ENCODE measurements at regions of chr2 and their contacts with region 1.

Region 1: DNA sequence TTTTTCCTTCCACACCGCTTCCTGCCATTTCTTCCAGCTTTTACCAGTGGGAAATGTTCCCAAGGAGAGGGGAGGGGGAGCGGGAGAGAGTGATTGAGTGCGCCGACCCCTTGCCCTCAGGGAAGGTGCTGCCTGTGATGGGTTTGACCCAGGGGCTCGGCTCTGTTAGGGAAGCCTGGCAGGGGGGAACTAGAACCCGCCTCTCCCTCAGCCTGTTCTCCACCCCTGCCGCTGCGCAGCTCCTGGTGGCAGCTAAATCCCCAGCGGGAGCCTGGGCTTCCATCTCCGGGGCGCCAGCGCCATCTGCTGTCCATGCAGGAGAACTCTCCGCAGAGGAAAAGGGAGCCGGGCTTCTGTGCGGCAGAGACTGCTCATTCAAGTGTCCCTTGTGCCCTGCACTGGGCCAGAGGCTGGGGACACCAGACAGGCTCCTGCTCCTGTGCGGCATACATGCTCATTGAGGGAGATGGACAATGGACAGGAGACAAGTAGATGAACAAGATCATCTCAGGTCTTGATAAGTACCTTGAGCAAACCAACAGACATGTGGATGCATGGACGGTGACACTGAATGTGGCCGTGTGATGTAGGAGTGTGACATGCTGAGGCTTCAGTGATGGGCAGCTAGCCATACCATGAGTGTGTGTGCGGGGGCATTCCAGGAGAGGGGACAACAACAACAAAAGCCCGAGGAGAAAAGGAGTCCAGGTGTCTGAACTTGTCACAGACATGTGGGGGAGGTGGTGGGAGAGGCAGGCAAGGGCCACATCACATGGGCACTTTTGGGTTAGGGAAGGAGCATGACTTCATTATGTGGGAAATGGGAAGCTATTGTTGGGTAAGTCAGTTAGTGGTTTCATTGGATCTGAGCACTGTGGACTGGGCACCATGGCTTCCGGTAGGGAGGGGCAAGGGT is 13.3 kb downstream of the CHPF start:
- DNase-seq: peak; percentile 82
- ATAC-seq: peak; percentile 97
- H3K4me3 Mint-ChIP-seq: no peak overlapping the region
- H3K27ac Mint-ChIP-seq: no peak overlapping the region
- H3K4me1 Mint-ChIP-seq: no peaks in the 10 kb centered on the region
- H3K27me3 Mint-ChIP-seq: peaks cover 44% of the 10 kb centered on the region
- CTCF ChIP-seq: peak; percentile 96

Region 2: DNA sequence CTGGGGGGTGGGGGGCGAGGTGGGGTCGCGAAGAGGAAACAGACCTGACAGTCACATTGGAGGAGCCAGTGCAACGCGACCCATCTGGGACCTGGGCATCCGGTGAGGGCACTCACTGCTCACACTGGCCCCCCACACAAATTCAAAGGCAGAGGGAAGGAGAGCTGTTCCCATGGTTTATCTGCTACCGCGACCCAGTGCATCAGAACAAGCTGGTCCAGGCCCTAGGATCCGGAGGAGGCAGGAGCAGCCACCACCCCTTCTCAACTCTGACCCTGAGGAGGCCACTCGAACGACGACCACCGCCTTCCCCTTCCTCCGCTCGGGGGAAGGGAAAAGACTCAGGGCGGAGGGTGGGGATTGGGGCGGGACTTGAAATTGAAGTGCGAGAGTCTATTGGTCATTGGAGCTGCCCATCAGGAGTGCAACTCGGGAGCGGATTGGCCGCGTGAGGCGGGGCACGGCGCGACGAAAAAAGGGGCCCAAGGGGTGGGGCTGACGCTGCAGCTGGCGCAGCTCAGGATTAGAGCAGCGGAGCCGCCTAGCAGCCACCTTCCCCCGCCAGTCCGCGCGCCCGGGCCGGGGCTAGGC is 571.1 kb before region 1 on chr2 and contains the start of gene CDK5R2:
- CTCF ChIA-PET with region 1: no interaction called
- POLR2A ChIA-PET with region 1: no interaction called
- intact Hi-C with region 1: no loop called
- DNase-seq: peak; percentile 89
- ATAC-seq: peak; percentile 99
- H3K4me3 Mint-ChIP-seq: peak within 1 kb of the TSS; percentile 29
- H3K27ac Mint-ChIP-seq: no peak within 1 kb of the TSS
- H3K4me1 Mint-ChIP-seq: peaks cover 17% of the 10 kb centered on the region
- H3K27me3 Mint-ChIP-seq: peaks cover 74% of the 10 kb centered on the region
- CTCF ChIP-seq: no peak
- total RNA-seq, gene CDK5R2: not detected

Region 3: GRCh38 chr2:219104107-219105035 is 425.9 kb before region 1 on chr2:
- CTCF ChIA-PET with region 1: no interaction called
- POLR2A ChIA-PET with region 1: no interaction called
- intact Hi-C with region 1: no loop called
- DNase-seq: peak; percentile 30
- ATAC-seq: peak; percentile 90
- H3K4me3 Mint-ChIP-seq: no peak overlapping the region
- H3K27ac Mint-ChIP-seq: peak overlapping the region; percentile 28
- H3K4me1 Mint-ChIP-seq: peaks cover 32% of the 10 kb centered on the region
- H3K27me3 Mint-ChIP-seq: no peaks in the 10 kb centered on the region
- CTCF ChIP-seq: peak; percentile 82

Region 4: DNA sequence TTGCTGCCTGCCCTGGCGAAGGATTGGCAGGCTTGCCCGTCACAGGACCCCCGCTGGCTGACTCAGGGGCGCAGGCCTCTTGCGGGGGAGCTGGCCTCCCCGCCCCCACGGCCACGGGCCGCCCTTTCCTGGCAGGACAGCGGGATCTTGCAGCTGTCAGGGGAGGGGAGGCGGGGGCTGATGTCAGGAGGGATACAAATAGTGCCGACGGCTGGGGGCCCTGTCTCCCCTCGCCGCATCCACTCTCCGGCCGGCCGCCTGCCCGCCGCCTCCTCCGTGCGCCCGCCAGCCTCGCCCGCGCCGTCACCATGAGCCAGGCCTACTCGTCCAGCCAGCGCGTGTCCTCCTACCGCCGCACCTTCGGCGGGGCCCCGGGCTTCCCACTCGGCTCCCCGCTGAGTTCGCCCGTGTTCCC is 112.1 kb before region 1 on chr2 and contains the start of gene DES:
- CTCF ChIA-PET with region 1: interaction called, 14 read pairs
- POLR2A ChIA-PET with region 1: no interaction called
- intact Hi-C with region 1: no loop called
- DNase-seq: no peak
- ATAC-seq: no peak
- H3K4me3 Mint-ChIP-seq: no peak within 1 kb of the TSS
- H3K27ac Mint-ChIP-seq: no peak within 1 kb of the TSS
- H3K4me1 Mint-ChIP-seq: no peaks in the 10 kb centered on the region
- H3K27me3 Mint-ChIP-seq: peaks cover 26% of the 10 kb centered on the region
- CTCF ChIP-seq: no peak
- total RNA-seq, gene DES: not detected

Region 5: GRCh38 chr2:219459460-219460311 is 70.6 kb before region 1 on chr2:
- CTCF ChIA-PET with region 1: interaction called, 38 read pairs
- POLR2A ChIA-PET with region 1: no interaction called
- intact Hi-C with region 1: no loop called
- DNase-seq: peak; percentile 62
- ATAC-seq: peak; percentile 50
- H3K4me3 Mint-ChIP-seq: no peak overlapping the region
- H3K27ac Mint-ChIP-seq: peak overlapping the region; percentile 25
- H3K4me1 Mint-ChIP-seq: peaks cover 14% of the 10 kb centered on the region
- H3K27me3 Mint-ChIP-seq: no peaks in the 10 kb centered on the region
- CTCF ChIP-seq: peak; percentile 84

Region 6: GRCh38 chr2:219484343-219485200 is 45.7 kb before region 1 on chr2:
- CTCF ChIA-PET with region 1: interaction called, 49 read pairs
- POLR2A ChIA-PET with region 1: interaction called, 3 read pairs
- intact Hi-C with region 1: loop called (anchors 5 kb)
- DNase-seq: no peak
- ATAC-seq: peak; percentile 54
- H3K4me3 Mint-ChIP-seq: peak overlapping the region; percentile 21
- H3K27ac Mint-ChIP-seq: no peak overlapping the region
- H3K4me1 Mint-ChIP-seq: peaks cover 3% of the 10 kb centered on the region
- H3K27me3 Mint-ChIP-seq: peaks cover 39% of the 10 kb centered on the region
- CTCF ChIP-seq: no peak

Region 7: GRCh38 chr2:219509780-219510511 is 20.4 kb before region 1 on chr2:
- CTCF ChIA-PET with region 1: interaction called, 71 read pairs
- POLR2A ChIA-PET with region 1: interaction called, 3 read pairs
- intact Hi-C with region 1: no loop called
- DNase-seq: peak; percentile 69
- ATAC-seq: peak; percentile 89
- H3K4me3 Mint-ChIP-seq: no peak overlapping the region
- H3K27ac Mint-ChIP-seq: no peak overlapping the region
- H3K4me1 Mint-ChIP-seq: peaks cover 18% of the 10 kb centered on the region
- H3K27me3 Mint-ChIP-seq: peaks cover 44% of the 10 kb centered on the region
- CTCF ChIP-seq: peak; percentile 53

Region 8: DNA sequence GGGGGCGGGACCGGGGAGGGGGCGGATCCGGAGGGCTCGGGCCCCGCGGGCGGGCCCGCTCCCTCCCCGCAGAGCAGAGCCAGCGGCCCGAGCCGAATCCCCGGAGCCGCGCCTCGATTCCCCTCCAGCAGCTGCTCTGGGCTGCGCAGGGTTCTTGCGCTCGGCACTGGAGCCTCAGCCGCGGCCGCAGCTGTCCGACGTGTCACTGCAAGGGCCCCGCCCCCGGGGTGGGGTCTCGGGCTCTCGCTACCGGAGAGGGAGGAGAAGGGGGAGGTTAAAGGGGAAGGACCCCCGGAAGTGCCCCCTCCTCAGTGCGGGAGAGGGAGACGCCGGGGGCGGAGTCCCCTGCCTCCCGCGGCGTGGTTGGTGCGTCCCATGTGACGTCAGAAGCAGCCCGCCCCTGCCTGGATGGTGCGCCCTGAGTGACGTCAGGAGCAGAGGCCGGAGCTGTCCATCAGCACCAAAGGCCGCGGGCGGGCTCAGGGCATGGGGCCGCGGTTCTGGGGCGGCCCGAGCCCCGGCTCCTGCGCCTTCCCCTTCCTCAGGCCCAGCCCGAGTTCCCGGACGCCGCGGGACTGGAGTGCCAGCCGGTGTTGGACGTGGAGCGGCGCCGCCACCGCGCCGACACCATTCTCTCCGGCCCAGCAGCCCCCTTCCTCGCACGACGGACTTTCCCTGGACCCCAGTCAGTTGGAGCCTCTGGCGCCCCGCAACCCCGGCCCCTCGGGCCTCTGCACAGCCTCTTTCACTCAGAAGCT is 13.5 kb after region 1 on chr2 and contains the starts of genes CHPF and TMEM198:
- CTCF ChIA-PET with region 1: interaction called, 74 read pairs
- POLR2A ChIA-PET with region 1: interaction called, 5 read pairs
- intact Hi-C with region 1: no loop called
- DNase-seq: peak; percentile 97
- ATAC-seq: peak; percentile 85
- H3K4me3 Mint-ChIP-seq: peak within 1 kb of the TSS; percentile 93
- H3K27ac Mint-ChIP-seq: peak within 1 kb of the TSS; percentile 77
- H3K4me1 Mint-ChIP-seq: peaks cover 21% of the 10 kb centered on the region
- H3K27me3 Mint-ChIP-seq: peaks cover 15% of the 10 kb centered on the region
- CTCF ChIP-seq: no peak
- total RNA-seq, gene CHPF: 16.6 to 18.4 TPM
- total RNA-seq, gene TMEM198: 2.1 to 2.2 TPM

Region 9: DNA sequence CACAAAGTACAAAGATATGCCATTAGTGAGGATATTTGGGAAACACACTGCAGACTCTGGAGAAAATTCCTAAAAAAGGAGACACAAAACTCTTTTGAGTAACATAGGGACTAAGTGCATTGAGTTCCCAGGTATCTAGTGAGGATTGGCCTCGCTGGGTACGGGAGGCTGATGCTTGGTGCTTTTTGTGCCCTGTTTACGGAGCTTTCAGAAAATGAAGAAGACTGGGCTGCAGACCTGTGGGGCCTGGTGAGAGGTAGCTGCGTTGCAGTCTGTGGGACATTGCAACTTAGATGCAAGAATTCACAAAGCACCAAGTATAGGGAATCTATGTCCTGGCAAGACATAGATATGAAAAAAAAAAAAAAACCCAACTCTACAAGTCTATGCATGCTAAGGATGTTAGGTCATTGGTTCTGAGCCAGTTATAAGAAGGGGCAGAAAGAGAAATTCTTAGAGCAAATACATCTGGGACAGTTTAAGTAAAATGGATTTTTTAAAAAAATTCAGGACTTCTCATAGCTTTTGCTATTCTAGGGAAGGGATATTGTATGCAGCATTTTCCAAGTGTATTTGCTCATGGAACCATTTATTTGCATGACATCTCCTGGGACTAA is 253.2 kb after region 1 on chr2:
- CTCF ChIA-PET with region 1: no interaction called
- POLR2A ChIA-PET with region 1: no interaction called
- intact Hi-C with region 1: no loop called
- DNase-seq: no peak
- ATAC-seq: no peak
- H3K4me3 Mint-ChIP-seq: no peak overlapping the region
- H3K27ac Mint-ChIP-seq: no peak overlapping the region
- H3K4me1 Mint-ChIP-seq: no peaks in the 10 kb centered on the region
- H3K27me3 Mint-ChIP-seq: no peaks in the 10 kb centered on the region
- CTCF ChIP-seq: no peak